Left lung (tissue), 14 donors: ENCODE measurements at regions of chr12 and their contacts with region 1.

Region 1: GRCh38 chr12:4311776-4312175 is 9.2 kb upstream of the TIGAR start:
- DNase-seq: no peak
- ATAC-seq: no peak
- H3K4me3 ChIP-seq: no peak overlapping the region
- H3K27ac ChIP-seq: no peak overlapping the region
- H3K4me1 ChIP-seq: no peaks in the 10 kb centered on the region
- H3K27me3 ChIP-seq: no peaks in the 10 kb centered on the region
- CTCF ChIP-seq: no peak

Region 2: DNA sequence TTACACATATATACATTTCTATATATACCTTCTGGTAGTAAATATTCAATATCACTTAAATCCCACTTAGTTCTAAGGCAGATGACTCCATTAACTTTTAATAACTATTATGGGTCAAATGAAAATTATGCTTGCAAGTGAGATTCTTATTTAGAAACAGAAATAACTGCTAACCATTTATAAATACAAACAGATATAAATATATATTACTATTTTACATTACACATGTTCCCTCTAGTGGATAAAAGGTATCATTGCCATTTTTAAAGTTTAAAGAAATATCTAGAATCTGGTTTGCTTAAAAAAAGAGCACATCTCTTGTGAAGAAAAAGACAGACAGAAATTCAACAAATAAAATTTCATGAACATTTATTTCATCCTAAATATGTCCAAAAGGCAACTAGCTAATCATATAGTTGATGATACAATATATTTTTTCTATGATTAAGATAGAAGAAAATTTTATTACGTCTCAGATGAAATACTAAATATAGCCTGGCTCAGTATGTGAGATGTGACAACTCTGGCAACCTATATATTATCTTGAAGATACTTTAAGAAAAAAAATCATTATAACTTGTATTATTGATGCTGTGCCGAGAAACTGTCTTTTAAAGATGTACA is 215.3 kb after region 1 on chr12:
- intact Hi-C with region 1: loop called in 1 of 2 experiments (anchors 10 kb)
- DNase-seq: peak in 2 of 4 donors; percentile 4 to 7
- ATAC-seq: no peak
- H3K4me3 ChIP-seq: no peak overlapping the region
- H3K27ac ChIP-seq: no peak overlapping the region
- H3K4me1 ChIP-seq: no peaks in the 10 kb centered on the region
- H3K27me3 ChIP-seq: no peaks in the 10 kb centered on the region
- CTCF ChIP-seq: peak; percentile 44 to 45